OCI-LY7 (cell line): ENCODE measurements at regions of chr7 and their contacts with region 1.

Region 1: GRCh38 chr7:140126435-140127034 is 50.2 kb downstream of the KDM7A start:
- DNase-seq: no peak
- H3K4me3 ChIP-seq: no peak overlapping the region
- H3K27ac ChIP-seq: no peak overlapping the region
- H3K4me1 ChIP-seq: no peaks in the 10 kb centered on the region
- CTCF ChIP-seq: no peak

Region 2: DNA sequence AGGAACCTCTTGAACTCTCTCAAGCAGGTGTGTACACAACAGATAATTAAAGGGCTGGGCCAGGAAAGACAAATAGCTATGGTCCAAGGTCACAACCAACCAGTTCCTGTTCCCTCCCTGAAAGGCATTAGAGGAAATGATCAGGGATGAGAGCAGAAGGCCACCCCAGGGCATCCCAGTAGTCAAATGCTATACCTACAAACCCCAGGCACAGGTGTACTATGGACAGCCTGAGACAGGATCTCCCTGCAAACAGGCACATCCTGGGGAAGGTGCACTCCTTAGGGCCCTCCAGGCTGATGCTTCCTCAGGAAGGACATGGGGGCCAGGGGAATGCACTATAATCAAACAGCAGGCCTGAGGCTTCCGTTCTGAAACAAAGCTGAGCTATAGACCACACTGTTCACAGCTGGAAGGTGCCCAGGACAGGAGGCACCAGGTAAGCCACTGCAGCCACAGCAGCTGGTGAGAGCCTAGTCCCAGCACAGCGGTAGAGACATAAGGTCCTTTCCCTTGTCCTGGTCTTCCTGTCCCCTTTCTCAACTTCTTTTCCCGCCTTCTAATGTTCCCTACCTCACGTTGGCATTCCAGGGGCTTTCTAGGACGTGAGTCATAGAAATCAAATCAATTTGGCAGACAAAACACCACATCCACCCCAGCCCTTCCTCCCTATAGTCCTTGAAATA is 77.1 kb before region 1 on chr7:
- CTCF ChIA-PET with region 1: no interaction called
- POLR2A ChIA-PET with region 1: no interaction called
- intact Hi-C with region 1: no loop called
- DNase-seq: no peak
- H3K4me3 ChIP-seq: no peak overlapping the region
- H3K27ac ChIP-seq: no peak overlapping the region
- H3K4me1 ChIP-seq: no peaks in the 10 kb centered on the region
- CTCF ChIP-seq: no peak

Region 3: GRCh38 chr7:140146574-140146973 is 20.0 kb after region 1 on chr7:
- CTCF ChIA-PET with region 1: no interaction called
- POLR2A ChIA-PET with region 1: no interaction called
- intact Hi-C with region 1: loop called (anchors 1 kb)
- DNase-seq: no peak
- H3K4me3 ChIP-seq: no peak overlapping the region
- H3K27ac ChIP-seq: no peak overlapping the region
- H3K4me1 ChIP-seq: no peaks in the 10 kb centered on the region
- CTCF ChIP-seq: no peak